Activated CD4-positive, alpha-beta T cell treated with anti-CD3 and anti-CD28 coated beads, Interleukin-2, amount 10 ng/mL, durations not matched to agents 24 days and 14 days (primary cell): ENCODE measurements at regions of chr9 and their contacts with region 1.

Region 1: DNA sequence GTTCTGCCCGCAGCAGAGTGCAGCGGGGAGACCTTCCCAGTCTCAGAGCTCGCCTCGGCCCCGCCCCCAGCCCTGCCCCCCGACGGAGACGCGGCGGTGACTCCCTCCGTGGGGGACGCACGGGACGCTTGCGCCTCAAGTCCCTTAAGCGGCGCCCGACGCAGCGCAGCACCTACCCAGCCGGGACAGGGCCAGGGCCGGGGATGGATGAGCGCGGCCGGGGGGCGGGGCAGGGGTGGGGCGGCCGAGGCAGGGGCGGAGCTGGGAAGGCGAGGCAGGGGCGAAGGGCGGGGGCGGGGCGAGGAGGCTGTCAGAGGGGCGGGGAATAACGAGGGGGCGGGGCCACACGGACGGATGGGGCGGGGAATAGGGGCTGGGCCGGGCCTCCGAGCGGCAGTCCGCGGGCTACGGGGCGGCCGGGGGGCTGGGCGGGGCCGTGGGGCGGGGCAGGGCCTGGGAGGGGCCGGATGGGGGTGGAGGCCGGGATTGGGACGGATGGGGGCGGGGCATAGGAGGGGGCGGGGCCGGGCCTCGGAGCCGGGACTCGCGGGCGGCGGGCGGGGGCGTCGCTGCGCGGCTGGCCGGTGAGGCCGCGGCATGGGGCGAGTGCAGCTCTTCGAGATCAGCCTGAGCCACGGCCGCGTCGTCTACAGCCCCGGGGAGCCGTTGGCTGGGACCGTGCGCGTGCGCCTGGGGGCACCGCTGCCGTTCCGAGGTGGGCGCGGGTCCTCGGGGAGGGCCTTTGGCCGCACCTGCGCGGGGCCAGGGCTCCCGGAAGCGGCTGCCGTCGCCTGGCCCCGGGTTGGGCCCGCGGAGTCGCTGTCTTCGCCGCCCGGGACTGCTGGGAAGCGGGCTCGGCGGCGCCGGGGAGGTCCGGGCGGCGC is at the start of gene ARRDC1:
- DNase-seq: peak; percentile 96
- H3K4me3 Mint-ChIP-seq: peak within 1 kb of the TSS; percentile 85
- H3K27ac Mint-ChIP-seq: peak within 1 kb of the TSS; percentile 65
- H3K4me1 Mint-ChIP-seq: peaks cover 28% of the 10 kb centered on the region
- H3K27me3 Mint-ChIP-seq: no peaks in the 10 kb centered on the region
- total RNA-seq, gene ARRDC1: 63.7 and 68.4 TPM in 2 replicates

Region 2: DNA sequence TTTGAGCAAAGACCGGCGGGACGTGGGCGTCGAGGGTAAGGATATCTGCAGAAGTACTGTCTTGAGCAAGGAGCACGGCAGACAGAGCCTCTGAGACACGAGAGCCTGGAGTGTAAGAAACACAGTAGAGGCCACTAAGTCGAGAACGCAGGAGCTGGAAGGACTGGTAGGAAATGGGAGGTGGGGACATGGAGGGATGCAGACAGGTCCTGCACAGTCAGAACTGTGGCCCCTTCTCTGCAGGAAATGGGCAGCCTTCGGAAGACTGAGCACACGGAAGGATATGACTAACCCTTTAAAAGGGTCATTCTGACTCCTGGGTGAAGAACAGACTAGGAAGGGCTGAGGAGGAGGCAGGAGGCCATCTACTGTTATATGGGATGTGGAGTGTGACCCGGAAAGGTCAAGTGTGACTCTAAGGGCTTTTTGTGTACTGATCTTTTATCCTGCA is 1696.6 kb before region 1 on chr9:
- intact Hi-C with region 1: no loop called
- DNase-seq: no peak
- H3K4me3 Mint-ChIP-seq: peak overlapping the region; percentile 75
- H3K27ac Mint-ChIP-seq: peak overlapping the region; percentile 82
- H3K4me1 Mint-ChIP-seq: peaks cover 35% of the 10 kb centered on the region
- H3K27me3 Mint-ChIP-seq: no peaks in the 10 kb centered on the region

Region 3: GRCh38 chr9:137459147-137459600 is 146.2 kb before region 1 on chr9 and contains the start of gene NSMF:
- intact Hi-C with region 1: loop called (anchors 1 kb)
- DNase-seq: peak; percentile 99
- H3K4me3 Mint-ChIP-seq: peak within 1 kb of the TSS; percentile 57
- H3K27ac Mint-ChIP-seq: no peak within 1 kb of the TSS
- H3K4me1 Mint-ChIP-seq: peaks cover 16% of the 10 kb centered on the region
- H3K27me3 Mint-ChIP-seq: no peaks in the 10 kb centered on the region
- total RNA-seq, gene NSMF: 68.6 and 69.6 TPM in 2 replicates

Region 4: DNA sequence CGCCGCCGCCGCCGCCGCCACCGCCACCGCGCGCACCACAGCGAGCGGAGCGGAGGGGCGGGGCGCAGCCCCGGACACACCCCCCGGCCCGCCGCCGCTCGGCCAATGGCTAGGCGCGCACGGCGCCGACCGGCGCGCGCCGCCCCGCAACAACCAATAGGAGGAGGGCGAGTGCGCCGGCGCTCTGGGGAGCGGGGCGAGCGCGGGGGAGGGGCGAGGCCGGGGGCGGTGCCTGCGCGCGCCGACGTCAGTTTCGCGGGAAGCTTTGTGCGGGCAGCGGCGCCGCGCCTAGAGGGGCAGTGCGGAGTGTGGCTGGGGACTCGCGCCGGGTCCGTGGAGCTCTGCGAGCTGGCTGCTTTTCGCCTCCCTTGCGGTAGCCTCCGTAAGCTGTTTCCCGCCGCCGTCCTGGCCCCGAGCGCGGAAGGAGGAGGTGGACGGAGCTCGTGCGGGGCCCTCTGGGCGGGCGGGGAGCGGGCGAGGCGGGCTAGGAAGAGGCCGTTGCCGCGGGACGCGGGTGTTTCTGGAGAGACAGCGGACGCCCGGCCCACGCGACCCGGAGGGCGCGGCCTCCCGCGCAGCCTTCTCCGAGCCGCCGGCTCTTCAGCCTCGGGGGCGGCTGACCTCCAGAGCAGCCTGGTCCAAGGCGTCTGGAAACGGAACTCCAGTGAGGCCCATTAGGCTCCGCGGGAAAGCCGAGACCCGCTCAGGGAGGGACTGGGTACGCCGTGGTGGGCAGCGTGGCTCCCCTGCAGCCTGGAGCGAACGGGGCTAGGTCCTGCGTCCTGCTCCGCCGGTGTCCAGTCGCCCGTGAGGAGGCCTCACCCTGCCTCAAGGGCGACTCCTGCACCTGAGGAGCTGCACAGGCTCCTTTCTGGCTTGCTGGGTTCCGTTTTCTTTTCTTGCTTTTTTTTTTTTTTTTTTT is 14.6 kb before region 1 on chr9 and contains the start of gene ZMYND19:
- intact Hi-C with region 1: loop called (anchors 1 kb)
- DNase-seq: peak; percentile 98
- H3K4me3 Mint-ChIP-seq: peak within 1 kb of the TSS; percentile 98
- H3K27ac Mint-ChIP-seq: peak within 1 kb of the TSS; percentile 94
- H3K4me1 Mint-ChIP-seq: peaks cover 10% of the 10 kb centered on the region
- H3K27me3 Mint-ChIP-seq: no peaks in the 10 kb centered on the region
- total RNA-seq, gene ZMYND19: 86.4 and 92.4 TPM in 2 replicates